SK-N-SH (cell line): ENCODE measurements at regions of chr6 and their contacts with region 1.

Region 1: GRCh38 chr6:63272397-63272796 is 47.4 kb downstream of the LGSN start:
- DNase-seq: peak; percentile 35
- H3K4me3 ChIP-seq: no peak overlapping the region; a peak in 1 of 4 replicates
- H3K27ac ChIP-seq: no peak overlapping the region
- H3K4me1 ChIP-seq: no peaks in the 10 kb centered on the region
- H3K27me3 ChIP-seq: no peaks in the 10 kb centered on the region
- CTCF ChIP-seq: peak; percentile 64
- EP300 ChIP-seq: no peak
- RAD21 ChIP-seq: peak; percentile 75

Region 2: GRCh38 chr6:63066055-63066704 is 206.2 kb before region 1 on chr6:
- CTCF ChIA-PET with region 1: interaction called, 11 read pairs
- POLR2A ChIA-PET with region 1: no interaction called
- DNase-seq: no peak
- H3K4me3 ChIP-seq: no peak overlapping the region
- H3K27ac ChIP-seq: no peak overlapping the region
- H3K4me1 ChIP-seq: no peaks in the 10 kb centered on the region
- H3K27me3 ChIP-seq: no peaks in the 10 kb centered on the region
- CTCF ChIP-seq: peak; percentile 48
- EP300 ChIP-seq: no peak
- RAD21 ChIP-seq: peak; percentile 27; the same call in 1 of the 2 replicates

Region 3: GRCh38 chr6:63259153-63259552 is 13.2 kb before region 1 on chr6:
- CTCF ChIA-PET with region 1: interaction called, 13 read pairs
- POLR2A ChIA-PET with region 1: no interaction called
- DNase-seq: no peak
- H3K4me3 ChIP-seq: no peak overlapping the region
- H3K27ac ChIP-seq: no peak overlapping the region
- H3K4me1 ChIP-seq: no peaks in the 10 kb centered on the region
- H3K27me3 ChIP-seq: no peaks in the 10 kb centered on the region
- CTCF ChIP-seq: no peak
- EP300 ChIP-seq: no peak
- RAD21 ChIP-seq: no peak

Region 4: GRCh38 chr6:63368347-63368746 is 96.0 kb after region 1 on chr6:
- CTCF ChIA-PET with region 1: no interaction called
- POLR2A ChIA-PET with region 1: no interaction called
- DNase-seq: no peak
- H3K4me3 ChIP-seq: no peak overlapping the region
- H3K27ac ChIP-seq: no peak overlapping the region
- H3K4me1 ChIP-seq: no peaks in the 10 kb centered on the region; a peak in 2 of 4 replicates
- H3K27me3 ChIP-seq: no peaks in the 10 kb centered on the region
- CTCF ChIP-seq: no peak
- EP300 ChIP-seq: no peak
- RAD21 ChIP-seq: no peak